ENCODE measurements at regions of chr6 and their contacts with region 1.

Region 1: DNA sequence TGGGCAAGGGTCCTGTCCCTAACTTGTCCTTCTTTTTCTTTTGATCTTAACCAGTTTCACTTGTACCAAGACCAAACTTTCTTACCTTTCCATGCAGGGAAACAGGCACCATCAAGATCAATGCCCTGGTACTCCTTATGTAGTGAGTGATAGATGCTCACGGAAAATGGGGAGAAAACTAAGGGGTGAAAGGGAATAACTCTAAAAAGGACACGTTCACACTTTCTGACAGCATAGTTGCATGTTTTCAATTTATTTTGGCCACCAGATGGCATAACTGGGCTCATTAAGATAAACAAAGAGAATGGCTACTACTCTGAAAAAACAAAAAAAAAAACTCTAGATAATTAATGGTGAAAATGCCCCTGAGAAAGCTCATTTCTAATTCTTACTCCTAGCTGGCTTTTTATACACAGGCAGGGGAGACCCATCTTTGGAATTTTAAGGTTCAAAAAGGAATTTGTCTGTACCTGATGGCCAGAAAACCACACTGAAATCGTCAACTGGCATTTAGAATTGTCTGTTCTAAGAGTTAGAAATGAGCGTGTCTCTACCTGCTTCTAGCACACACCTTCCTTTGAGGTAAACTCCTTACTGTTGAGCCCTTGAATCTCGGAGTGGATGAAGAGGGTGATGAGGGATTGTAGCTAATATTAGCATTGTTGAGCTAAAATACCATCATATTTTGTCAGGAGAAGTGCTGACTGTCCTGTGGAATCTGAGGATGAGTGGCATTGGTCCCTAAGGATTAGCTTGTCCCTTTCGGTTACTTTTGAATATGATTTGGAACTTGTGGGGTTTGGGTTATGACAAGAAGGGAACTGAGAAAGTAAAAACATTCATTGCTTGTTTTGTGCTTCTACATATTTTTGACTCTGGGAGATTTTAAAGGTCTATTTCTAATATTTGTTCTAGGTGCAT is 62.2 kb upstream of the DDR1 start:
- DNase-seq: peak; percentile 65
- H3K4me3 Mint-ChIP-seq: no peak overlapping the region
- H3K27ac Mint-ChIP-seq: peak overlapping the region; percentile 63
- H3K4me1 Mint-ChIP-seq: peaks cover 50% of the 10 kb centered on the region
- H3K27me3 Mint-ChIP-seq: no peaks in the 10 kb centered on the region
- CTCF ChIP-seq: peak; percentile 54

Region 2: GRCh38 chr6:30044630-30045029 is 777.5 kb before region 1 on chr6:
- CTCF ChIA-PET with region 1: no interaction called
- POLR2A ChIA-PET with region 1: no interaction called
- intact Hi-C with region 1: no loop called
- DNase-seq: no peak
- H3K4me3 Mint-ChIP-seq: no peak overlapping the region
- H3K27ac Mint-ChIP-seq: no peak overlapping the region
- H3K4me1 Mint-ChIP-seq: no peaks in the 10 kb centered on the region
- H3K27me3 Mint-ChIP-seq: no peaks in the 10 kb centered on the region
- CTCF ChIP-seq: no peak

Region 3: GRCh38 chr6:30396833-30397479 is 425.2 kb before region 1 on chr6:
- CTCF ChIA-PET with region 1: no interaction called
- POLR2A ChIA-PET with region 1: no interaction called
- intact Hi-C with region 1: no loop called
- DNase-seq: peak; percentile 74
- H3K4me3 Mint-ChIP-seq: no peak overlapping the region
- H3K27ac Mint-ChIP-seq: no peak overlapping the region
- H3K4me1 Mint-ChIP-seq: no peaks in the 10 kb centered on the region
- H3K27me3 Mint-ChIP-seq: peaks cover 34% of the 10 kb centered on the region
- CTCF ChIP-seq: peak; percentile 61

Region 4: GRCh38 chr6:30489081-30490025 is 332.8 kb before region 1 on chr6 and contains the start of gene HLA-E:
- CTCF ChIA-PET with region 1: no interaction called
- POLR2A ChIA-PET with region 1: no interaction called
- intact Hi-C with region 1: no loop called
- DNase-seq: peak; percentile 100
- H3K4me3 Mint-ChIP-seq: peak within 1 kb of the TSS; percentile 88
- H3K27ac Mint-ChIP-seq: peak within 1 kb of the TSS; percentile 97
- H3K4me1 Mint-ChIP-seq: peaks cover 4% of the 10 kb centered on the region
- H3K27me3 Mint-ChIP-seq: no peaks in the 10 kb centered on the region
- CTCF ChIP-seq: no peak
- total RNA-seq, gene HLA-E: 83.6 and 103 TPM in 2 replicates

Region 5: DNA sequence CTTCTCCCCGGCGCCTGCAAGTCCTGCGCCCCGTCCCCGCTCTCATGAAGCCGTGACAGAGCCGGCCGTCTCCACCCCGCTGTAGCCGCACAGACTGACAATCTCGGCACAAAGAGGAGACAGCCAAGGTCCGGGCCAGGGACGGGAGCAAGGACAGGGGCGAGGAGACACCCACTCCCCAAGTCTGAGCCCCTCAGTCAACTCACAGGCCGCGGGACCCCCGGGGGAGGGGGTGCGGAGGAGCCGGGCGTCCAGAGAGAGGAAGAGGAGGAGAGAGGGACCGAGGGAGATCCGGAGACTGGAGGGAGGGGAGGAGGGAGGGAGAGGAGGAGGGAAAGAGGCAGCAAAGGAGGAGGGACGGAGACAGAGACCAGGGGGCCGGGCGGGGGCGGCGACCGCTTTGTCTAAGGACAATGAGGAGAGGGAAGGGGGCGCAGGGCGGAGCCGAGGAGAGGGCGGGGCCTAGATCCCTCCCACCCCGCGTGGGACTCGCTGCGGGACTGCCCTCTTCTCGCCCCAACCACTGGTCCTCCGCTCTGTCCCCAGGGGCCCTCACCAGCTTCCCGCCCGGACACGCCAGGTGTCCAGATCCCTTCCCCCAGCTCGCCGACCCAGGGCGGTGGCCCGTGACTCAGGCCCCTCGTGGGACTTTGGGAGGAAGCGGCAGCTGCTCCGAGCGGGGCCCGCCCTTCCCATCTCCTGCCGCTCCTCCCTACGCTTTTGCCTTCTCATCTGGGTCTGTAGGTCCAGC is 135.0 kb before region 1 on chr6:
- CTCF ChIA-PET with region 1: interaction called, 3 read pairs
- POLR2A ChIA-PET with region 1: interaction called, 5 read pairs
- intact Hi-C with region 1: loop called (anchors 5 kb)
- DNase-seq: peak; percentile 96
- H3K4me3 Mint-ChIP-seq: peak overlapping the region; percentile 94
- H3K27ac Mint-ChIP-seq: peak overlapping the region; percentile 80
- H3K4me1 Mint-ChIP-seq: peaks cover 66% of the 10 kb centered on the region
- H3K27me3 Mint-ChIP-seq: no peaks in the 10 kb centered on the region
- CTCF ChIP-seq: no peak

Region 6: GRCh38 chr6:30730601-30731435 is 91.3 kb before region 1 on chr6:
- CTCF ChIA-PET with region 1: interaction called, 49 read pairs
- POLR2A ChIA-PET with region 1: interaction called, 30 read pairs
- intact Hi-C with region 1: no loop called
- DNase-seq: peak; percentile 91
- H3K4me3 Mint-ChIP-seq: no peak overlapping the region
- H3K27ac Mint-ChIP-seq: no peak overlapping the region
- H3K4me1 Mint-ChIP-seq: peaks cover 7% of the 10 kb centered on the region
- H3K27me3 Mint-ChIP-seq: no peaks in the 10 kb centered on the region
- CTCF ChIP-seq: peak; percentile 86

Region 7: GRCh38 chr6:30752157-30752927 is 69.8 kb before region 1 on chr6:
- CTCF ChIA-PET with region 1: interaction called, 79 read pairs
- POLR2A ChIA-PET with region 1: interaction called, 159 read pairs
- intact Hi-C with region 1: loop called (anchors 1 kb)
- DNase-seq: peak; percentile 100
- H3K4me3 Mint-ChIP-seq: peak overlapping the region; percentile 54
- H3K27ac Mint-ChIP-seq: peak overlapping the region; percentile 94
- H3K4me1 Mint-ChIP-seq: peaks cover 49% of the 10 kb centered on the region
- H3K27me3 Mint-ChIP-seq: no peaks in the 10 kb centered on the region
- CTCF ChIP-seq: no peak

Region 8: DNA sequence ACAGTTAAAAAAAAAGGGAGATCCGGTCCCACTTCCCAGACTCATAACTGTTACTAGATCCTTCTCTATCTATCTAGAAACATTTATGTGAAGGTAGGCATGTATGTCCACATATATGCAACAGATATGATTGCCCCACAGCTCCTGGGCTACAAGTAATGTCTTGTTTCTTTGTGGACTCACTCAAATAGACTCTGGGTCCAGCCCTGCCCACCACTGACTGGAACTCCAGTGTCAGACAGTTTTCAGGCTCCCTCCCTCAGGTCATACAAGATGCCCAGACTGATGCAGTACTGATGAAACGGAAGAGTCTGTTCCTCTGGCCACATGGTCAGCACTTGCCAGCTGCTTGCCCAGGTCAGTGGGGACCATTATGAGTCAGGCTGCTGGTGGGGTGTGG is 47.0 kb before region 1 on chr6:
- CTCF ChIA-PET with region 1: interaction called, 37 read pairs
- POLR2A ChIA-PET with region 1: interaction called, 54 read pairs
- intact Hi-C with region 1: no loop called
- DNase-seq: no peak
- H3K4me3 Mint-ChIP-seq: no peak overlapping the region
- H3K27ac Mint-ChIP-seq: peak overlapping the region; percentile 31
- H3K4me1 Mint-ChIP-seq: peaks cover 44% of the 10 kb centered on the region
- H3K27me3 Mint-ChIP-seq: no peaks in the 10 kb centered on the region
- CTCF ChIP-seq: no peak

Region 9: DNA sequence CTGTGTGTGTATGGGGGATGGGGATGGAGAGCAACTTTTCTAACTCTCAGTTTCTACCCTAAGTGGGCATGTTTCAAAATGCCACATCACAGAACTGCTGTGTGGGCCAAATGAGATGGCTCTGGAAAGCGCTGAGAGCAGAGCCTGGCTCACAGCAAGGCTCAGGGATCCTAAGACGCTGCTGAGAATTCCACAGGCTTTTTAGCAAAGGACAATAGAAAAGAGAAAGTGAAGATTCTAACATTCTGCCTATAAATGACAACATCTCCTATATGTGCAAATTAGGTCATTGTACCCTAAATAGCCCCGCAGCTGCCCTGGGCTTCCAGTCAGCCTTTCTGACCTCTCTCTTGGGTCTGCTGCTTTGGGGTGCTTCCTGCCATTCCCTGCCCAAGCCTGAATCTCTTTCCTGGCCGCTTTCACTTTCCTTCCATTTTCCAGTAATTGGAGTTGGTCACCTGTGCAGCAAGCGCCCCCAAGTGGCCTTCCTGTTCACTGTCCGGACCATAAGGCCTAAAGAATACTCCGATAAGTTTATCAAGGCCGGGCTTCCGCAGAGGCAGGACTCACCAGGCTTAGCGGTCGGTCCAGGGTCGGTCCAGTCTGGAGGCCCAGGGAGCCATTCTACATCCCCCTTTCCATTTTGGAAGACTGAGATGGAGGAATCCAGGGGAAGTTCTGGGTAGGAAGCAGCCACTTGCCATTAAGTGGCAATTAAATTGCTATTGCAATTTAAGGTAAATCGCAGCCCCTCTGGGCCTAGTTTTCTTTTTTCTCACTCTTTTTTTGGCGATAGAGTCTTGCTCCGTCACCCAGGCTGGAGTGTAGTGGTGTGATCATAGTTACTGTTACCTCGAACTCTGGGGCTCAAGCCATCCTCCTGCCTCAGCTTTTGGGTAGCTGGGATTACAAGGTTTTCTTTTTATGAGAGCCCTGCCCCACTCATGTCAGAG is 55.6 kb after region 1 on chr6:
- CTCF ChIA-PET with region 1: interaction called, 92 read pairs
- POLR2A ChIA-PET with region 1: interaction called, 80 read pairs
- intact Hi-C with region 1: no loop called
- DNase-seq: peak; percentile 93
- H3K4me3 Mint-ChIP-seq: peak overlapping the region; percentile 61
- H3K27ac Mint-ChIP-seq: peak overlapping the region; percentile 95
- H3K4me1 Mint-ChIP-seq: peaks cover 40% of the 10 kb centered on the region
- H3K27me3 Mint-ChIP-seq: no peaks in the 10 kb centered on the region
- CTCF ChIP-seq: peak; percentile 90

Region 10: DNA sequence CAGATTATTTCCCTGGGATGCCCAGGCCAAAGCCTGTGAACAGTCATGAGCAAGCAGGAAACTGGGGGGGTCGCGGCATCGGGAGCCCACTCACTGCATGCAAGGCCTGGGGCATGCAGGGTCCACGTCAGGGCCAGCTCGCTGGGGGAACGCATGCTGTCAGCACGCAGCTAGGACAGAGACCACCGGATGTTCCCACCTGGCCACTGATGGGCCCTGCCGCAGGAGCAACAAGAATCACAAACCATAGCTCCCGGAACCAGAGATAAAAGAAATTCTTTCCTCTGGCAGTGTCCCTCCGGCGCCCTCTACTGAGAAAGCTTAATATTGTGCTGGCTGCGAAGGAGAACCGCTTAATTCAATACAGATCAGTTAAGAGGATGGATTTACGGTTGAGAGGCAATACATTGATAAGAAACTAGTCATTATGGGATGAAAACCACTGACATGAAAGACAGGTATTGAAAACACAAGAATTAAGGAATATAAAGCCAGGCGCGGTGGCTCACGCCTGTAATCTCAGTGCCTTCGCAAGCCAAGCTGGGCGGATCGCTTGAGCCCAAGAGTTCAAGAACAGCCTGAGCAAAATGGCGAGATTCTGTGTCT is 257.6 kb after region 1 on chr6:
- CTCF ChIA-PET with region 1: interaction called, 23 read pairs
- POLR2A ChIA-PET with region 1: interaction called, 3 read pairs
- intact Hi-C with region 1: no loop called
- DNase-seq: peak; percentile 69
- H3K4me3 Mint-ChIP-seq: no peak overlapping the region
- H3K27ac Mint-ChIP-seq: no peak overlapping the region
- H3K4me1 Mint-ChIP-seq: peaks cover 16% of the 10 kb centered on the region
- H3K27me3 Mint-ChIP-seq: no peaks in the 10 kb centered on the region
- CTCF ChIP-seq: peak; percentile 62